Endothelial cell of umbilical vein (primary cell): ENCODE measurements at regions of chr19 and their contacts with region 1.

Region 1: DNA sequence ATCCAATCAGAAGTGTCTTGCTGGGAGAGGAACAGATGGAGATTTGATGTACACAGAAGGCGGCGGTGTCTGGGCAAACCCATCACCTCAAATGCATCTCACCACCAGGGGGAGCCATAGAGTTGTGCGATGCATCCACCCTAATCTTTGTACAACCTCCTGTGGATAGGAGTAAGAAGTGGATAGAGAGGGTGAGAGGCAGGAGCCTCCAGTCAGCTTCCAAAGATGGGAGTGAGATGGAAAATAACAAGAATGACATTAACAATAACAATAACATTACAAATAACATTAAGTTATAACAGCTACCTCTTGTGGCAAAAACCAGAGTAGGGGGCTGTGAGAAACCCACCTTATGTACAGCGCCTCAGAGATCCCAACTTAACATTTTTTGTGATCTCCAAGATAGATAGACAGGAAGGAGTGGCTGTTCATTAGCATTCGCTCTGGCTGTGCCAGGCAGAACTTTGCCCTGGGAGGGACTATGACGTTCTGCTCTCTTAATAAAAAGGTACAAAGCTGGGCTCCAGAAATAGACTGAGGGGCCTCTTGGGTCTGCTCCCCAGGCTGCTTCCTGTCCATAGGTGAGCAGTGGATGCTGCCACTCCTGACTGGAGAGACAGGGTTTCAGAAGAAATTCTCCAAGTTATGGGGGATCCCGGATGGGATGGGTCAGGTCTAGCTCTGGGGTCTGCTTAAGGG is 5.2 kb upstream of the CEACAM18 start:
- DNase-seq: peak; percentile 61
- H3K4me3 ChIP-seq: no peak overlapping the region
- H3K27ac ChIP-seq: no peak overlapping the region
- H3K4me1 ChIP-seq: peaks cover 4% of the 10 kb centered on the region
- H3K27me3 ChIP-seq: no peaks in the 10 kb centered on the region
- CTCF ChIP-seq: peak; percentile 73 to 83
- POLR2A ChIP-seq: no peak

Region 2: DNA sequence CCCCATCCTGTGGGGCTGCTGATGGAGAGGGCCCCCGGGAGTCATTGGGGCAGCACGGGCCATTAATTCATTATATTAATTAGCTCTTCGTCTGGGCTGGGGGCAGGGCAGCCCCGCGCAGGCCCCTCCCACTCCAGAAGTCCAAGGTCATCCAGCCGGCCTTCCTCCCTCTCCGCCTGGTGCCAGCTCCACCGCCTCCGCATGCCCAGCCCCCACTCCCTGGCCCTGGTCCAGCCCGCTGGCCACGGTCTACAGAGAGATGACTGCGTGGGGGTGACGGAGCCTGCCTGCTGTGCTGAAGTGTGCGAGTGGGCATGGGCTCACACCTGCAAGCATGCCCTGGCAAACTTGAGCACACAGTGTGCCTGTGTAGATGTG is 152.9 kb before region 1 on chr19:
- CTCF ChIA-PET with region 1: no interaction called
- POLR2A ChIA-PET with region 1: no interaction called
- dilution Hi-C with region 1: no loop called
- intact Hi-C with region 1: no loop called
- DNase-seq: no peak
- H3K4me3 ChIP-seq: no peak overlapping the region
- H3K27ac ChIP-seq: no peak overlapping the region
- H3K4me1 ChIP-seq: no peaks in the 10 kb centered on the region
- H3K27me3 ChIP-seq: no peaks in the 10 kb centered on the region
- CTCF ChIP-seq: no peak
- POLR2A ChIP-seq: no peak

Region 3: DNA sequence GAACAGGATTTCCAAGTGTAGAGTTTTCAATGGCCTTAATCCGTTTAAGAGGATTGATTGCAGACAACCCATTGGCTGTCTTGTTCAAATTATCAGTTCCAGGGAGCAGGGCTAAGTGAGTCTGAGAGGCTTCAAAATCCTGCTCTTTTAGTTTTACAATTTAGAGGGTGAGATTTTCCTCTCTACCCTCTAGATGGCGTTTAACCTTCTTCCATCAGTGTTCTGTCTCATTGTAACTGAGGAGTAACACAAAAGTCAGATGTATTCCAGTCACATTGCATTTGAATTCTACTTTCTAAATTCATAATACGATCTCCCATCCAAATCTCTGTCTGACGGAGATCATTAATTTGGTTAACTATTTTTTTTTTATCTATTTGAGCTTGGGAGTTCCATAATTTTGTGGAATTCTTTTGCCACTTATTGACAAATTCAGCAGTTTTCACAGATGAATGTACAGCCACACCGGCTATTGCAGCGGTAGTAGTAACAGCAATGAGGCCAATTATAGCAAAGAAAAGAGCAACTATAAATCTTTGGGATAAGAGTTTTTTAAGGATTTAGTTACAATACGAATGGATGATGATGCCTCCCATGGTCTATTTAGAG is 75.0 kb before region 1 on chr19:
- CTCF ChIA-PET with region 1: no interaction called
- POLR2A ChIA-PET with region 1: no interaction called
- dilution Hi-C with region 1: no loop called
- intact Hi-C with region 1: no loop called
- DNase-seq: peak; percentile 8
- H3K4me3 ChIP-seq: no peak overlapping the region
- H3K27ac ChIP-seq: no peak overlapping the region
- H3K4me1 ChIP-seq: peaks cover 8% of the 10 kb centered on the region
- H3K27me3 ChIP-seq: no peaks in the 10 kb centered on the region
- CTCF ChIP-seq: peak; percentile 9 to 42
- POLR2A ChIP-seq: no peak

Region 4: GRCh38 chr19:51514866-51515481 is 41.8 kb after region 1 on chr19:
- CTCF ChIA-PET with region 1: interaction called, 19 read pairs
- POLR2A ChIA-PET with region 1: no interaction called
- dilution Hi-C with region 1: no loop called
- intact Hi-C with region 1: loop called (anchors 1 kb)
- DNase-seq: peak; percentile 55
- H3K4me3 ChIP-seq: no peak overlapping the region
- H3K27ac ChIP-seq: no peak overlapping the region
- H3K4me1 ChIP-seq: no peaks in the 10 kb centered on the region
- H3K27me3 ChIP-seq: peaks cover 0 to 4% of the 10 kb centered on the region in 2 experiments
- CTCF ChIP-seq: peak; percentile 65 to 69
- POLR2A ChIP-seq: no peak

Region 5: GRCh38 chr19:51637362-51637978 is 164.3 kb after region 1 on chr19:
- CTCF ChIA-PET with region 1: interaction called, 89 read pairs
- POLR2A ChIA-PET with region 1: no interaction called
- dilution Hi-C with region 1: no loop called
- intact Hi-C with region 1: loop called (anchors 1 kb)
- DNase-seq: peak; percentile 19
- H3K4me3 ChIP-seq: no peak overlapping the region
- H3K27ac ChIP-seq: no peak overlapping the region
- H3K4me1 ChIP-seq: no peaks in the 10 kb centered on the region
- H3K27me3 ChIP-seq: peaks cover 3 to 6% of the 10 kb centered on the region in 2 experiments
- CTCF ChIP-seq: peak; percentile 43 to 46
- POLR2A ChIP-seq: no peak